Thyroid gland (tissue), 4 donors: ENCODE measurements at regions of chr6 and their contacts with region 1.

Region 1: GRCh38 chr6:31087494-31088089 is 24.8 kb downstream of the C6orf15 start:
- DNase-seq: peak; percentile 85 to 88
- H3K4me3 ChIP-seq: no peak overlapping the region
- H3K27ac ChIP-seq: no peak overlapping the region
- H3K4me1 ChIP-seq: peaks cover 0 to 4% of the 10 kb centered on the region in 2 donors
- H3K27me3 ChIP-seq: no peaks in the 10 kb centered on the region
- CTCF ChIP-seq: peak in 5 of 6 experiments; percentile 70 to 85 (median 78)
- POLR2A ChIP-seq: no peak

Region 2: DNA sequence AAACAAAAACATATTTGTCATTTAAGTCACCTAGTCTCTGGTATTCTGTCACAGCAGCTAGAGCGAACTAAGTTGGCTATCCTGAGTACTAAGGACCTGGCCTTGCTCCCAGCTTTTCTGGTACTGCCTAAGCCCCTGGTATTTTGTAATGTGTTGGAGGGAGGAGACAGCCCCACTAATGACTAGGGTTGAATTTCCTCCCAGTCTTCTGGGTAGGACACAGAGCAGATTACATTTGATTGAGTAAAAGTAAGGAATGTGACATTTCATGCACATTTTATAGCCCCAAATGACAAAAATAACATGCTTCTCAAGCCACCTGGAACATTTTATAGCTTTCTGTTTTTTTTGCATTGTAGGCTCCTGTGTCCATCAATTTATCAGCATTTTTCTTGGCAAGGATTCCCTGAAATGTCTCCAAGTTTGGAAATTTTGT is 251.1 kb before region 1 on chr6:
- intact Hi-C with region 1: loop called (anchors 10 kb)
- DNase-seq: peak; percentile 82 to 88
- H3K4me3 ChIP-seq: no peak overlapping the region
- H3K27ac ChIP-seq: peak overlapping the region; percentile 23 to 76 (median 72)
- H3K4me1 ChIP-seq: peaks cover 17 to 41% of the 10 kb centered on the region in 2 donors
- H3K27me3 ChIP-seq: no peaks in the 10 kb centered on the region
- CTCF ChIP-seq: no peak
- POLR2A ChIP-seq: peak in 1 of 2 donors; percentile 14